Stomach (tissue), 19 donors: ENCODE measurements at regions of chr2 and their contacts with region 1.

Region 1: DNA sequence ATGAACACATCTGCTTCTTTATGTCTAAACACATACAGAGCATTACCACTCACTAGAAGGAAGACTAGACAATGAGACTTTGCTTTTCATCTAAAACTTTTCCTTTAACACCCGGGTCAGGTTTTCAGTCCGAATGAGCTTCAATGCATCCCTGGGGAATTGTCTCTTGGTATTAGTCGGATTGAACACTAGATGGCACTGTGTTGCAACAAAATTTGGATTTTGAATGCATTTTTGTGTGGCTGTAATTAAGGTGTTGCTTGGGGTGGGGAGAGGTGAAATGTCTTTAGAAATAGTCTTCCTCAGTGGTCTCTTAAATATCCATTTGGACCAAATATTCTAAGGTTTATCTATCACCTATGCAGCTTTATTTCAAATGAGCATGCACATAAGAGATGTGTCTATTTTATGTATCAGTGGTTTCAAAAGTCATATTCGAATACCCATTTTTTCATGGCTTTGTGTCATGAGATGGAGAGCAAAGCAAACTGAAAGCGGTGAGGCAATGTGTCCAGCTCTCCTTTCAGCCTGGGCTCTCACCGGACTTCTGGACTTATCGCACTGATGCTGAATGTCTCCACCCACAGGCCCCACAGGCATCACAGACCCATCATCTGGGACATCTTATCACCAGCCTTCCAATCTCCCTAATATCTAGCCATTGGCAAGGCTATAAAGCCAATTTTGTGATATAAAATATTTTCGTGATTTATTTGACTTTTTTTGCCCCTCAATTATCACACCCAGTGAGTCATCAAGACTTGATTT is 510.3 kb downstream of the RNF144A start:
- DNase-seq: peak in 1 of 2 donors; percentile 85
- H3K4me3 ChIP-seq: no peak overlapping the region
- H3K27ac ChIP-seq: no peak overlapping the region
- H3K4me1 ChIP-seq: peaks cover 4 to 14% (median 10%) of the 10 kb centered on the region in 4 donors
- H3K27me3 ChIP-seq: peaks cover 0 to 55% (median 26%) of the 10 kb centered on the region in 3 donors
- CTCF ChIP-seq: peak in 5 of 7 experiments; percentile 48 to 73 (median 64)
- EP300 ChIP-seq: no peak
- POLR2A ChIP-seq: no peak

Region 2: DNA sequence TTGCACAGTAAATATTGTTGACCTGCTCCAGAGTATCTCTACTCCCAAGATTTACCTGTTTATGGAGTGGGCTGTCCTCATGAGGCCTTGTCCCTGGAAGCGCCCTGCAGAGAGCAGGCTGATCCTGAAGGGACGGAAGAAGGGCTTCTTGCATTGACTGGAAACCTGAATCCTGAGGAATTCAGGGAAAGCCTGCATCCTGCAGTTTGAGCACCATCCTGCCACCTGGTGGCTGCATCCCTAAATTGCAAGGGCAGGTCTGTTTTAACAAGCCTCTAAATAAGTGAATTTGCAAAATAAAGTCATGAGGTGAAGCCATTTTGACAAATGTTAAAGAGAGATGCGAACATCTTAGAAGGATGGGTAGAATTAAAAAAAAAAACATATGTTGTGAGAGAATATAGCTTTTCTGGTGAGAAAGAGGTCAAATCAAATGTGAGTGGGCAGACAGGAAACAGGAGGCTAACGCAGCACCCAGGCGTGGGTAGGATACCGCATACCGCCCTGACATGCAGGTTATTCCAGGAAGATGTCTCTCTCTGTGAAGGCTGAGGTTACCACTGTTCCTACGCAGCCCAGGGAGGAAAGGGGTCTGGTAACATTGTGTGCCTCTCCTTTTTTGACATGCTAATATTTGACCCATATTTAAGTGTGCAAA is 244.7 kb after region 1 on chr2:
- intact Hi-C with region 1: loop called (anchors 5 kb)
- DNase-seq: peak; percentile 63 to 73
- H3K4me3 ChIP-seq: no peak overlapping the region
- H3K27ac ChIP-seq: no peak overlapping the region
- H3K4me1 ChIP-seq: peaks cover 0 to 12% (median 0%) of the 10 kb centered on the region in 4 donors
- H3K27me3 ChIP-seq: no peaks in the 10 kb centered on the region
- CTCF ChIP-seq: peak in 5 of 7 experiments; percentile 55 to 75 (median 70)
- EP300 ChIP-seq: no peak
- POLR2A ChIP-seq: no peak

Region 3: GRCh38 chr2:8685697-8686358 is 1258.4 kb after region 1 on chr2:
- intact Hi-C with region 1: loop called (anchors 5 kb)
- DNase-seq: peak; percentile 77 to 90
- H3K4me3 ChIP-seq: peak overlapping the region; percentile 74 to 82 (median 80)
- H3K27ac ChIP-seq: peak overlapping the region; percentile 73 to 98 (median 84)
- H3K4me1 ChIP-seq: peaks cover 12 to 31% (median 24%) of the 10 kb centered on the region in 4 donors
- H3K27me3 ChIP-seq: peaks cover 0 to 10% (median 0%) of the 10 kb centered on the region in 3 donors
- CTCF ChIP-seq: peak in 5 of 7 experiments; percentile 59 to 99 (median 96)
- EP300 ChIP-seq: no peak
- POLR2A ChIP-seq: no peak